HAP-1 (cell line): ENCODE measurements at regions of chr1 and their contacts with region 1.

Region 1: DNA sequence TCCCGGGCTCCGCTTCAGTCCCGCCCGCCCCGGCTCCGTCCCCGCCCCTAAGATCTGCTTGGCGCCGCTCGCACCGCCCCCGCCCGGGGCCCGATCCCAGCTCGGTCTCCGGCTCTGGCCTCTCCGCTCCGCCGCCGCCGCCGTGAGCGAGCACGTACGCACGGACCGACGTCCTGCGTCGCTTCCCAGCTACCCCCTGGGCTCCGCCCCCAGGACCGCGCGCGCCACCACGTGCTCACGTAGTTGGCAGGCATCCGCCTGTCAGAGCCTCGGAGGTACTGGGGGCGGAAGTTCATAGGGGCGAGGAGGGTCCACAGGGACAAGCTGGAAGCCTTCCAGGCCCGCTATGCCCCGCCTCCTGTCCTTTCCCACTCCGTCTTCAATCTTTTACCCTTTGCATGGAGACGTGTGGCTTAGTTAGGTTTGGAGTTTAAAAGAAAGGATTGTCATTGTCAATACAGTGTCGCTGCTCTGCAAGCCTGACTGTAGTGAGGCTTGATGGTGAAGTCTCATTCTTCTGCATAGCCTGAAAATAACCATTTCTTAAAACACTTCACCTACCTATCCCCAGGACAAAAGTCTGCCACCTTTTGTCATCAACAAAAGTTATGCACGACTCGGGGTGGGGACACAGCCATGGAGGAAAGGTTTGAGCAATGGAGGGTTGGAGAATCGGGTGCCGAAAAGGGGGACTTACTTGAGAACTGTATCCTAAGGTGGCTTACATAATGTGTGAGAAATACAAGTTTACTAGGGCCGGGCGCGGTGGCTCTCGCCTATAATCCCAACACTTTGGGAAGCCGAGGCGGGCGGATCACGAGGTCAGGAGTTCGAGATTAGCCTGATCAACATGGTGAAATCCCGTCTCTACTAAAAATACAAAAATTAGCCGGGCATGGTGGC is at the start of gene CLK2:
- DNase-seq: peak; percentile 97 to 99
- H3K4me3 ChIP-seq: peak within 1 kb of the TSS; percentile 62
- H3K4me1 ChIP-seq: peaks cover 14% of the 10 kb centered on the region
- H3K27me3 ChIP-seq: no peaks in the 10 kb centered on the region

Region 2: GRCh38 chr1:155308493-155309422 is 35.2 kb after region 1 on chr1 and contains the start of gene FDPS:
- in situ Hi-C with region 1: loop called (anchors 5 kb)
- DNase-seq: peak; percentile 98
- H3K4me3 ChIP-seq: peak within 1 kb of the TSS; percentile 89
- H3K4me1 ChIP-seq: 0 out of 2 replicates have a peak, but pooled peaks cover 7% of the 10 kb centered on the region
- H3K27me3 ChIP-seq: no peaks in the 10 kb centered on the region

Region 3: DNA sequence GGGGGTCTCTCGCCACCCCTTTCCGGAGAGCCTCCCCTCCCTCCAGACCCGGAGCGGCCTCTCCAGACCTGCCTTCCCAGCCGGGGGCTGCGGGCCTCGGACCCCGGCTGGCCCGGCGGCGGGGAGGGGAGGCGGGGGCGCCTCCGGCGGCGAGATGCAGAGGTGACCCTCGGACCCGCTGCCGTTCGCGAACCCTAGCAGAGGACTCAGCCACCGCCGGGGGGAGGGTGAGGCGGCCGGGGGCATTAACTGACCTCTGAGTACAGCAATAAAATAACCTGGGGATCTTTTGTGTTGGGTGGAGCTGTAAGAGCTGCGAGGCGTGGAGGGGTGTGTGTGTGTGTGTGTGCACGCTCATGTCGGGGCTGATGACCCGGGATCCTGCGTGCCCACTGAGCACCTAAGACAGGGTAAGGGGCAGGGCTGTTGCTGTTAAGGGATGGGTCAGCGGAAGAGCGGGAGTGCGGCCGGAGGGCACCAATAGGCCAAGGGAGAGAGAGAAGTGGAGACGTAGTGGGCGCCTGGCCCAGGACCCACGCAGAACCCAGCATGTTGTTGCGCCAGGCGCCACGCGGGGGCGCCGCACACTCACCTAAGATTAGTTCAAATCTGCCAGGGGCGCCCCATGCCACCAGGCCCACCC is 1352.0 kb after region 1 on chr1:
- in situ Hi-C with region 1: no loop called
- DNase-seq: peak; percentile 40 to 82
- H3K4me3 ChIP-seq: peak overlapping the region; percentile 18
- H3K4me1 ChIP-seq: no peaks in the 10 kb centered on the region; the same call in 1 of the 2 replicates
- H3K27me3 ChIP-seq: peaks cover 21% of the 10 kb centered on the region